Activated naive CD4-positive, alpha-beta T cell treated with anti-CD3 and anti-CD28 coated beads, Interleukin-2, amount 10 ng/mL, durations not matched to agents 7 days and 5 days (primary cell): ENCODE measurements at regions of chr10 and their contacts with region 1.

Region 1: DNA sequence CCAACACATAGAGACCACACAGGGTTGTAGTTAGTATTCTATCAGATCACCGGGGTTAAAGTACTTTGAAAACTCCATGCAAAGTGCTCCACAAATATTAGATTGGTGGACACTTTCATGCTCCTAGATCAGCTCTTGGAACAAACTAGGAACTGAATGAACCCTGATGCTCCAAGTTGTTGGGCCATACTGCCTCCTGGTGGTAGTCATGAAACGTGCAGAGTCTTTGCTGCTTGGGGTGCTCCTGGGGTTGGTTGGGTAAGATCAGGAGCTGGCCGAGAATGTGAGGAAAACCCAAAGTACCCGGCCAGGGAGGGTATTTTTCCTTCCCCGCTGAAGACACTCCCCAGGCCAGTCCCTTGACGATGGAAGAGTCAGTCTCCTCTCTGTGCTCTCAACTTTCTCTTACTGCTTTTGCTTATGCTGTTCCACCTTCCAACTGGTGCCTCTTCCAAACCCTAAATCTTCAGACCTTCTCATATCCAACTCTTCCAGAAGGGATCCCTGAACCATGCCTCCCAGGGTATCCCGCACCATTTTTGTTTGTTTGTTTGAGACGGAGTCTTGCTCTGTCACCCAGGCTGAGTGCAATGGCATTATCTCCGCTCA is 920 bp upstream of the RPEL1 start:
- DNase-seq: peak; percentile 76
- H3K4me3 Mint-ChIP-seq: no peak overlapping the region
- H3K27ac Mint-ChIP-seq: no peak overlapping the region
- H3K4me1 Mint-ChIP-seq: peaks cover 21% of the 10 kb centered on the region
- H3K27me3 Mint-ChIP-seq: peaks cover 7% of the 10 kb centered on the region

Region 2: DNA sequence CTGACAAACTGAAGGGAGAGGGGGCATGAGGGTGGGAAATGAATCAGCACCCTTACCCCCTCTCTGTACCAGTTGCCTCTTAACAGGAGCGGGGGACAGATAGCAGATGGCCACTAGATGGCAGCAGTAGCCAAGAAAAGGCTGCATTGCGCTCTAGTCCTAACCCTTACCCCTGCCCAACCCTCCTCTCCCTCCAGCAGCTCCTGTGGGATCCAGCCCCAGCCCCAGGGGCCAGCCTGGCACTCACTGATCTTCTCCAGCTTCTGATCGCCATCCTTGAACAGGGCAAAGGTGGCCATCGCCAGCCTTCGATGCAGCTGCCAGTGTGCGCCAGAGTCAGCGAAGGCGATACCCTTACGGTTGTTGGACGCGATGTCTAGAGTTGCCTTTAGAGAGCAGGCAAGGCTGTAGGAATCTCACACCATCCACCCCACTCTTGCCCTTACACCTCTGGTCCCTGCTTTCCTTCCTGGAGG is 409.7 kb before region 1 on chr10:
- CTCF ChIA-PET with region 1: interaction called, 21 read pairs
- DNase-seq: peak; percentile 85
- H3K4me3 Mint-ChIP-seq: no peak overlapping the region
- H3K27ac Mint-ChIP-seq: no peak overlapping the region
- H3K4me1 Mint-ChIP-seq: no peaks in the 10 kb centered on the region
- H3K27me3 Mint-ChIP-seq: peaks cover 15% of the 10 kb centered on the region

Region 3: DNA sequence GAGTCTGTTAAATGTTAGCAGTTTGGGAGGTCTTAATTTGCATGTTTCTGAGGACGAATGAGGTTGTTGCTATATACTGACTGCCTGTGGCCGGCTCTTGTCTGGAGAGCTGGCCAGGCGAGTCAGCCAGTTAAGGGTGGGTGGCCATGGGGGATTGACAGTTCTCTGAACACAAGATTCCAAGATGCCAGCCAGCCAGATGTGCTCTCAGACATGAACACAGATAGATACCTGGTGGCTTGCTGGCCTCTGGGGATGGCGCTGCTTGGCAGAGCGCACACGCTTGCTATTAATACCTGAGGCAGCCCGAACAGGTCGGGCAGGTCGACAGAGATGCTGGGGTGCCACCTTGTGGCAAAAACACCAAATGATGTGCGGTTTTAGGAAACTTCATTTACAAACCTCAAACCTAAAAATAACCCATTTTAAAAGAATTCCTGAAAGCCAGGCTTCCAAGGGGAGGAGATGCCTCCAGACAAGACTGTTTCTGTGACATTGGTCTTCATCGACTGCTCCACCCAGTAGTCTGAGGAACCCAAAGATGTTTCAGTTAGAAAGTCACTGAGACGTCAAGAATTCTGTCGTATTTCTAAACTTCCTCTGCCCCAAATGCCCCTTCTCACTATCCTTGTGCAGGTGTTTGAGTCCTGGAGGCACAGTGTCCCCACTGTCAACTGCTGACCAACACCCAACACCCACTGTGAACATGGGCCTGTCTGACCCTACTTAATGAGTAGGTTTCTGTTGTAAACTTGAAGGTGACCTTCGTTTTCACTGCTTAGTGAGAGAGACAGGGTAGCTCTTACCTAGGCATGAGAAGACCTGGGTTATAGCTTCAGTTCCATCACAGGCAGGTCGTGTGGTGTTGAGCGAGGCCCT is 175.1 kb before region 1 on chr10:
- CTCF ChIA-PET with region 1: interaction called, 18 read pairs
- DNase-seq: peak; percentile 83
- H3K4me3 Mint-ChIP-seq: no peak overlapping the region
- H3K27ac Mint-ChIP-seq: peak overlapping the region; percentile 75
- H3K4me1 Mint-ChIP-seq: peaks cover 40% of the 10 kb centered on the region
- H3K27me3 Mint-ChIP-seq: no peaks in the 10 kb centered on the region

Region 4: GRCh38 chr10:103111031-103111917 is 133.5 kb before region 1 on chr10:
- CTCF ChIA-PET with region 1: interaction called, 14 read pairs
- DNase-seq: no peak
- H3K4me3 Mint-ChIP-seq: no peak overlapping the region
- H3K27ac Mint-ChIP-seq: no peak overlapping the region
- H3K4me1 Mint-ChIP-seq: no peaks in the 10 kb centered on the region
- H3K27me3 Mint-ChIP-seq: no peaks in the 10 kb centered on the region

Region 5: GRCh38 chr10:103231047-103231551 is 13.7 kb before region 1 on chr10:
- CTCF ChIA-PET with region 1: interaction called, 14 read pairs
- DNase-seq: no peak
- H3K4me3 Mint-ChIP-seq: no peak overlapping the region
- H3K27ac Mint-ChIP-seq: no peak overlapping the region
- H3K4me1 Mint-ChIP-seq: no peaks in the 10 kb centered on the region
- H3K27me3 Mint-ChIP-seq: peaks cover 2% of the 10 kb centered on the region

Region 6: GRCh38 chr10:103265717-103266329 is 21.1 kb after region 1 on chr10:
- CTCF ChIA-PET with region 1: no interaction called
- DNase-seq: peak; percentile 76
- H3K4me3 Mint-ChIP-seq: no peak overlapping the region
- H3K27ac Mint-ChIP-seq: no peak overlapping the region
- H3K4me1 Mint-ChIP-seq: no peaks in the 10 kb centered on the region
- H3K27me3 Mint-ChIP-seq: peaks cover 25% of the 10 kb centered on the region